K562 (cell line): ENCODE measurements at regions of chr3 and their contacts with region 1.

Region 1: DNA sequence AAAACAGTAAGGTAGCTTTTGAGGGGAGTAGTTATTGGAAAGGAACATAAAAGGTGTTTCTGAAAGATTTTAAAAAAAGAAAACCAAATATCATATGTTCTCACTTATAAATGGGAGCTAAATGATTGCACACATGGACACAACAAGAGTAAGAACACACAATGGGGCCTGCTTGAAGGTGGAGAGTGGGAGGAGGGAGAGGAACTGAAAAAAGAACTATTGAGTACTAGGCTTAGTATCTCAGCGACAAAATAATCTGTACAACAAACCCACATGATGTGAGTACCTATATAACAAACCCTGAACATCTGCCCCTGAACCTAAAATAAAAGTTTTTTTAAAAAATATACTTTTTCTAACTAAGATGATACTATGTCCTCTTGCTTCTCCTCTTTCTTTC is 138.3 kb downstream of the CGGBP1 start:
- DNase-seq: no peak
- ATAC-seq: no peak
- H3K4me3 ChIP-seq: no peak overlapping the region
- H3K27ac ChIP-seq: no peak overlapping the region
- H3K4me1 ChIP-seq: no peaks in the 10 kb centered on the region
- H3K27me3 ChIP-seq: no peaks in the 10 kb centered on the region
- CTCF ChIP-seq: no peak
- EP300 ChIP-seq: no peak
- POLR2A ChIP-seq: no peak
- RAD21 ChIP-seq: no peak

Region 2: GRCh38 chr3:87867001-87867400 is 53.5 kb before region 1 on chr3:
- CTCF ChIA-PET with region 1: no interaction called
- POLR2A ChIA-PET with region 1: no interaction called
- in situ Hi-C with region 1: no loop called
- intact Hi-C with region 1: loop called (anchors 2 kb)
- DNase-seq: no peak
- ATAC-seq: no peak
- H3K4me3 ChIP-seq: no peak overlapping the region
- H3K27ac ChIP-seq: no peak overlapping the region
- H3K4me1 ChIP-seq: no peaks in the 10 kb centered on the region
- H3K27me3 ChIP-seq: no peaks in the 10 kb centered on the region
- CTCF ChIP-seq: no peak
- EP300 ChIP-seq: no peak
- POLR2A ChIP-seq: no peak
- RAD21 ChIP-seq: no peak